Activated B cell treated with CpG ODN at 0.5 μM for 24 hours (primary cell): ENCODE measurements at regions of chr1 and their contacts with region 1.

Region 1: DNA sequence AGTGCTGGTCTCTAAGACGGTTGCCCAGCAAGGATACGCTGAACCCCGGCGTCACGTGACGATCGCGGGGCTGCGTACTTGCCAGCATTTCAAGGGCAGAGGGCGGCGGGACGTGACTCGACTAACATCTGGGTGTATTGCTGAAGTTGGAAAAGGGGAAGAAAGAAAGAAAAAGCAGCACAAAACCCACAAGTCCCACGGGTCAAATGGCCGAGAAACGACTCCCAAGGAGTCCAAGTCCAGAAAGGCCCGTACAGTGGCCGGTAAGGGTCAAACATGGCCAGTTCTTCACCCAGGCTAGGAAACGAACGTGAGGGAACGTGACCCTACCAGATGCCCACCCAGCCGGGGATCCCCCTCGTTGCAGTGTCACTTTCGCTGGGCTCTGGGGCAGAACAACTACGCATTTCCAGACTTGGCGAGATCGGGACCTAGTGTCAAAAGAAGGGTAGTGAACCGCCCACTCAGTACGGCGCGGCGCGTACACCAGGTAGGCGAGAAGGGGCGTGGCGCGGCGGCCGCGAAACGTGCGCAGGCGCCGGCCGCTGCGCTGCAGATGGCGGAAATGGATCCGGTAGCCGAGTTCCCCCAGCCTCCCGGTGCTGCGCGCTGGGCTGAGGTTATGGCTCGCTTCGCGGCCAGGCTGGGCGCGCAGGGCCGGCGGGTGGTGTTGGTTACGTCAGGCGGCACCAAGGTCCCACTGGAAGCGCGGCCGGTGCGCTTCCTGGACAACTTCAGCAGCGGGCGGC is at the starts of genes PPCS and ZMYND12:
- DNase-seq: peak; percentile 91
- ATAC-seq: peak; percentile 86
- H3K4me3 Mint-ChIP-seq: peak within 1 kb of the TSS; percentile 91
- H3K27ac Mint-ChIP-seq: peak within 1 kb of the TSS; percentile 98
- H3K4me1 Mint-ChIP-seq: peaks cover 27% of the 10 kb centered on the region
- H3K27me3 Mint-ChIP-seq: no peaks in the 10 kb centered on the region
- CTCF ChIP-seq: no peak
- total RNA-seq, gene PPCS: 63.1 and 65.3 TPM in 2 replicates
- total RNA-seq, gene ZMYND12: 0.53 and 0.56 TPM in 2 replicates

Region 2: GRCh38 chr1:42335050-42335808 is 121.0 kb before region 1 on chr1 and contains the start of gene FOXJ3:
- CTCF ChIA-PET with region 1: no interaction called
- POLR2A ChIA-PET with region 1: interaction called, 3 read pairs
- intact Hi-C with region 1: loop called (anchors 1 kb)
- DNase-seq: peak; percentile 91
- ATAC-seq: peak; percentile 92
- H3K4me3 Mint-ChIP-seq: peak within 1 kb of the TSS; percentile 93
- H3K27ac Mint-ChIP-seq: peak within 1 kb of the TSS; percentile 86
- H3K4me1 Mint-ChIP-seq: peaks cover 41% of the 10 kb centered on the region
- H3K27me3 Mint-ChIP-seq: no peaks in the 10 kb centered on the region
- CTCF ChIP-seq: no peak
- total RNA-seq, gene FOXJ3: 54.7 and 63.9 TPM in 2 replicates

Region 3: DNA sequence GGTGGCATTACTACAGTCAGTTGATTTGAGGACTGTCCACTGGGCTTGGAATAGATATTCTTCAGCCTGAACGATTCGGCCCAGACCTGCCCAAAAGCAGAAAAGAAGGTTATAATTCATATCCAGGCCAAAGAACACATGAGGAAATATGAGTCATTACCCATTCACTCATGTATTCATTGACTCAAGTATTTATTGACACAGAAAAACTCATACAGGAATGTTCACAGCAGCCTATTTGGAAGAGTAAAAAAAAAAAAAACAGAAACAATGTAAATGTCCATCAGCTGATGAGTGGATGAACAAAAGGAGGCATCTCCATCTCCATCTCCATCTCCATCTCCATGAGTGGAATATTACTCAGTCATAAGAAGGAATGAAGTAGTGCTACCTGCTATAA is 16.2 kb before region 1 on chr1:
- CTCF ChIA-PET with region 1: no interaction called
- POLR2A ChIA-PET with region 1: no interaction called
- intact Hi-C with region 1: no loop called
- DNase-seq: no peak
- ATAC-seq: no peak
- H3K4me3 Mint-ChIP-seq: no peak overlapping the region
- H3K27ac Mint-ChIP-seq: no peak overlapping the region
- H3K4me1 Mint-ChIP-seq: no peaks in the 10 kb centered on the region
- H3K27me3 Mint-ChIP-seq: no peaks in the 10 kb centered on the region
- CTCF ChIP-seq: no peak

Region 4: DNA sequence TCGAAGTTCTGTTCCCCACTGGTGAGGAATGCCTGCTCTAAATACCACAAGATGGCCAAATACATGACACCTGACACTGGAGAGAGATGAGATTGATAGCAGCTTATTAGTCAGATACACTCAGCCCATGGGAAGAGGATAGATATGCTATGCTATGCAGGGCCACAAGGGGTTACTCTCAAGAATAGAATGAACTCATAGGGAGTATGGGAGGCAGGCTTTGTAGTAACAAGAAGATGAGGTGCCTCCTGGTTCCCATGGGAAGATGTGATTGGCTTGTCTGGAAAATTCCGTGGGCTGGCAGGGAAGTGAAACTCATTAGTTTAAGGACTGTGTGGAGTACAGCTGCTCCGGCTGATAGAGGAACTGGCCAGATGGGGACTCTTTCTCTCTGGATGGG is 23.4 kb after region 1 on chr1:
- CTCF ChIA-PET with region 1: no interaction called
- POLR2A ChIA-PET with region 1: interaction called, 10 read pairs
- intact Hi-C with region 1: no loop called
- DNase-seq: no peak
- ATAC-seq: no peak
- H3K4me3 Mint-ChIP-seq: no peak overlapping the region
- H3K27ac Mint-ChIP-seq: no peak overlapping the region
- H3K4me1 Mint-ChIP-seq: no peaks in the 10 kb centered on the region
- H3K27me3 Mint-ChIP-seq: no peaks in the 10 kb centered on the region
- CTCF ChIP-seq: no peak

Region 5: DNA sequence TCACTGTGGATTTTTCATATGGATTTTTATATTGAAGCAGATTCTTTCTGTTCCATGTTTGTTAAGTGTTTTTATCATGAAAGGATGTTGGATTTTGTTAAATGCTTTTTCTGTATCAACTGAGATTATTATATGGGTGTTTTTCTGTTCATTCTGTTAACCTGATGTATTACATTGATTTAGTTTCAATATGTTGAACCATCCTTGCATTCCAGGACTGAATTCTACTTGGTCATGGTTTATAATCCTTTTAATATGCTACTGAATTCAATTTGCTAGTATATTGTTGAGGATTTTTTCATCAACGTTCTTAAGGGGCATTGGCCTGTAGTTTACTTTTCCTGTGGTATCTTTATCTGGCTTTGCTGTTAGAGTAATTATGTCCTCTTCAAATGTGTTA is 62.7 kb after region 1 on chr1:
- CTCF ChIA-PET with region 1: no interaction called
- POLR2A ChIA-PET with region 1: no interaction called
- intact Hi-C with region 1: no loop called
- DNase-seq: no peak
- ATAC-seq: no peak
- H3K4me3 Mint-ChIP-seq: no peak overlapping the region
- H3K27ac Mint-ChIP-seq: no peak overlapping the region
- H3K4me1 Mint-ChIP-seq: no peaks in the 10 kb centered on the region
- H3K27me3 Mint-ChIP-seq: no peaks in the 10 kb centered on the region
- CTCF ChIP-seq: no peak

Region 6: DNA sequence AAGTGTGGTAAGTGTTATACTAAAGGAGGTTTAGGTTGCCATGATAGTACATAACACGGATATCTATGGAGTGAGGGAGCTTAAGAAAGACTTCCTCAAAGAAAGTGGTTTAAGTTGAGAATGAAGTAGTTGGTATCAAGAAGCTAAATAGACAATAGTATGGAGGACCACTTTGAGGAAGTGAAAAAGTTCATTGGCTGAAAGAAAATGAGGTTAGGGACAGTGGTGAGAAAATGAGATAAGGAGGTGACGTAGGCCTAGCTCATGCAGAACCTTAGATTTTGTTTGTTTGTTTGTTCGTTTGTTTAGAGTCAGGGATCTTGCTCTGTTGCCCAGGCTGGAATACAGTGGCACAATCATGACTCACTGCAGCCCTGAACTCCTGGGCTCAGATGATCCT is 129.8 kb after region 1 on chr1:
- CTCF ChIA-PET with region 1: no interaction called
- POLR2A ChIA-PET with region 1: no interaction called
- intact Hi-C with region 1: no loop called
- DNase-seq: no peak
- ATAC-seq: no peak
- H3K4me3 Mint-ChIP-seq: no peak overlapping the region
- H3K27ac Mint-ChIP-seq: peak overlapping the region; percentile 16
- H3K4me1 Mint-ChIP-seq: peaks cover 3% of the 10 kb centered on the region
- H3K27me3 Mint-ChIP-seq: no peaks in the 10 kb centered on the region
- CTCF ChIP-seq: no peak

Region 7: GRCh38 chr1:42657971-42658879 is 202.0 kb after region 1 on chr1 and contains the start of gene PPIH:
- CTCF ChIA-PET with region 1: no interaction called
- POLR2A ChIA-PET with region 1: interaction called, 6 read pairs
- intact Hi-C with region 1: loop called (anchors 2 kb)
- DNase-seq: peak; percentile 87
- ATAC-seq: peak; percentile 99
- H3K4me3 Mint-ChIP-seq: peak within 1 kb of the TSS; percentile 95
- H3K27ac Mint-ChIP-seq: peak within 1 kb of the TSS; percentile 85
- H3K4me1 Mint-ChIP-seq: peaks cover 35% of the 10 kb centered on the region
- H3K27me3 Mint-ChIP-seq: no peaks in the 10 kb centered on the region
- CTCF ChIP-seq: no peak
- total RNA-seq, gene PPIH: 64.1 and 65.1 TPM in 2 replicates

Region 8: GRCh38 chr1:42816585-42817434 is 360.6 kb after region 1 on chr1 and contains the starts of genes ERMAP and SVBP:
- CTCF ChIA-PET with region 1: no interaction called
- POLR2A ChIA-PET with region 1: no interaction called
- intact Hi-C with region 1: loop called (anchors 1 kb)
- DNase-seq: peak; percentile 97
- ATAC-seq: peak; percentile 88
- H3K4me3 Mint-ChIP-seq: peak within 1 kb of the TSS; percentile 86
- H3K27ac Mint-ChIP-seq: peak within 1 kb of the TSS; percentile 86
- H3K4me1 Mint-ChIP-seq: peaks cover 20% of the 10 kb centered on the region
- H3K27me3 Mint-ChIP-seq: no peaks in the 10 kb centered on the region
- CTCF ChIP-seq: no peak
- total RNA-seq, gene ERMAP: 7.1 and 10.7 TPM in 2 replicates
- total RNA-seq, gene SVBP: 21.5 and 22.4 TPM in 2 replicates

Region 9: DNA sequence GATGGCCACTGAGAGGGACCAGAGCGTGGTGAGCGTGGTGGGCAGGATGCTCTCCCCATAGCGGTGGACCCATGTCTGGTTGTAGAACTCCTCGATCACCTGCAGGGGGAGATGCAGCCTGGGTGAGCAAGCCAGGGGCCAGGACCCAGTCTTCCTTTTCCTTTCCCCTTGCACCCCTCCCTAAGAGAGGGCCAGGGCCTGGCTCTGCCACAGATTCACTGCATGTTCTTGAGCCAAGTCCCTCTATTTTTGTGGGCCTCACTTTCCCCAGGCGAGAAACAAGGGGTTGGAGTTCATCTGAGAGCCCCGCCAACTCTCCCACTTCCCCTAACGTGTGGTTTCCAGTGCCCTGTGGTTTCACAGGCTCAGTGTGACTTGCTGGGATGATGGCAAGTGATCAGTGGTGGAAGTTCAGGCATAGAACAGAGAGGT is 474.9 kb after region 1 on chr1:
- CTCF ChIA-PET with region 1: no interaction called
- POLR2A ChIA-PET with region 1: no interaction called
- intact Hi-C with region 1: loop called (anchors 10 kb)
- DNase-seq: peak; percentile 47
- ATAC-seq: peak; percentile 16
- H3K4me3 Mint-ChIP-seq: peak overlapping the region; percentile 69
- H3K27ac Mint-ChIP-seq: peak overlapping the region; percentile 91
- H3K4me1 Mint-ChIP-seq: peaks cover 75% of the 10 kb centered on the region
- H3K27me3 Mint-ChIP-seq: no peaks in the 10 kb centered on the region
- CTCF ChIP-seq: no peak

Region 10: DNA sequence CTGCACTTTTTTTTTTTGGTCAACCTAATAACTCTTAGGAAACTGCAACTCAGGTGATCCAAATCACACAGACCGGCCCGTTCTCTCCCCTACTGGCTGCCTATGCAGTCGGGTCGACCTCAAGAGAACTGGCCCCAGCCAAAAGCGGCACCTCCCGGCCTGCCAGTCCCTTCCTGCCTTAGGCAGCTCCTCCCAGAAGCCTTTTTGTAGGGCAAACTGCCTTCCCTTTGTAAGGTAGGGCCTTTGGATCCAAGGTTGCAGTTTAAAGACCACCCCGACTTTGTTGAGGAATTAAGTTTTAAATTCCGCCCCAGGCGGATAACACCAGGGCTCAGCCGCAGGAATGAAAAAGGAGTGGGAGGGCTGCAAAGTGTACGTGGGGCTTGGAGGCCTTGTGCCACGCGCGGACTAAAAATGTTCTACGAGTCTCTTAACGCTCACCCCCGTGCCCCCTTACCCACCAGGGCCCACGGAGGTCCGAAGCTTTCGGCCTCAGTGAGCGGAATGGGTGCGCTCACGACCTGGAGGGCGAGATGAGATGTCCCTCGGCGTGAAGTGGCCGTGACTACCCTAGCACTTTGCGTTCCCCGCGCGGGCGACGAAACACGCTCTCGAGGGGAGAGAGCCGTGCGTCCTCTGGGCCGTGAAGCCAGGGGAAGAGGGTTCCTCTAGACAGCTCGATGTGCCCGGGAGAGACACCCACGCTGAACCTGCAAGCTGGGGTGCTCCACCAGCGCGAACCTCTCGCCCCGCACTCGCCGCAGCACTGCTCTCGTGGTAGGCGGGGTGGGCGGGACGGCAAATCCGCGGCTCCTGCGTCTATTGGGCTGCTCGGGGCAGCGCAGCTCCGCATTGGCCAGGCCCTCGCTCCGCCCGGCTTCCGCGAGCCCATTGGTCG is 1250.7 kb after region 1 on chr1:
- CTCF ChIA-PET with region 1: no interaction called
- POLR2A ChIA-PET with region 1: no interaction called
- intact Hi-C with region 1: loop called (anchors 2 kb)
- DNase-seq: no peak
- ATAC-seq: peak; percentile 97
- H3K4me3 Mint-ChIP-seq: peak overlapping the region; percentile 86
- H3K27ac Mint-ChIP-seq: peak overlapping the region; percentile 63
- H3K4me1 Mint-ChIP-seq: peaks cover 33% of the 10 kb centered on the region
- H3K27me3 Mint-ChIP-seq: no peaks in the 10 kb centered on the region
- CTCF ChIP-seq: no peak